Activated T-helper 1 cell treated with anti-CD3 and anti-CD28 coated beads, Interleukin-12 subunit alpha, Interleukin-12 subunit beta, Interleukin-2, Interleukin-4 antibody, amounts not matched to agents 30 ng/mL and 10 ng/mL and 1 ng/mL, durations not matched to agents 14 hours and 24 hours and 36 hours (primary cell): ENCODE measurements at regions of chrX and their contacts with region 1.

Region 1: GRCh38 chrX:103817502-103817901 is 14.6 kb downstream of the RAB9B start:
- DNase-seq: no peak
- H3K4me3 Mint-ChIP-seq: no peak overlapping the region
- H3K27ac Mint-ChIP-seq: no peak overlapping the region
- H3K4me1 Mint-ChIP-seq: no peaks in the 10 kb centered on the region
- H3K27me3 Mint-ChIP-seq: peaks cover 19% of the 10 kb centered on the region

Region 2: GRCh38 chrX:103293118-103293517 is 524.4 kb before region 1 on chrX:
- intact Hi-C with region 1: no loop called
- DNase-seq: no peak
- H3K4me3 Mint-ChIP-seq: no peak overlapping the region
- H3K27ac Mint-ChIP-seq: no peak overlapping the region
- H3K4me1 Mint-ChIP-seq: no peaks in the 10 kb centered on the region
- H3K27me3 Mint-ChIP-seq: peaks cover 3% of the 10 kb centered on the region

Region 3: GRCh38 chrX:103533511-103534216 is 283.8 kb before region 1 on chrX:
- intact Hi-C with region 1: loop called (anchors 1 kb)
- DNase-seq: peak; percentile 33
- H3K4me3 Mint-ChIP-seq: peak overlapping the region; percentile 74
- H3K27ac Mint-ChIP-seq: no peak overlapping the region
- H3K4me1 Mint-ChIP-seq: peaks cover 6% of the 10 kb centered on the region
- H3K27me3 Mint-ChIP-seq: peaks cover 6% of the 10 kb centered on the region

Region 4: GRCh38 chrX:103711533-103712369 is 105.8 kb before region 1 on chrX:
- intact Hi-C with region 1: loop called (anchors 1 kb)
- DNase-seq: peak; percentile 19
- H3K4me3 Mint-ChIP-seq: no peak overlapping the region
- H3K27ac Mint-ChIP-seq: no peak overlapping the region
- H3K4me1 Mint-ChIP-seq: no peaks in the 10 kb centered on the region
- H3K27me3 Mint-ChIP-seq: peaks cover 7% of the 10 kb centered on the region

Region 5: DNA sequence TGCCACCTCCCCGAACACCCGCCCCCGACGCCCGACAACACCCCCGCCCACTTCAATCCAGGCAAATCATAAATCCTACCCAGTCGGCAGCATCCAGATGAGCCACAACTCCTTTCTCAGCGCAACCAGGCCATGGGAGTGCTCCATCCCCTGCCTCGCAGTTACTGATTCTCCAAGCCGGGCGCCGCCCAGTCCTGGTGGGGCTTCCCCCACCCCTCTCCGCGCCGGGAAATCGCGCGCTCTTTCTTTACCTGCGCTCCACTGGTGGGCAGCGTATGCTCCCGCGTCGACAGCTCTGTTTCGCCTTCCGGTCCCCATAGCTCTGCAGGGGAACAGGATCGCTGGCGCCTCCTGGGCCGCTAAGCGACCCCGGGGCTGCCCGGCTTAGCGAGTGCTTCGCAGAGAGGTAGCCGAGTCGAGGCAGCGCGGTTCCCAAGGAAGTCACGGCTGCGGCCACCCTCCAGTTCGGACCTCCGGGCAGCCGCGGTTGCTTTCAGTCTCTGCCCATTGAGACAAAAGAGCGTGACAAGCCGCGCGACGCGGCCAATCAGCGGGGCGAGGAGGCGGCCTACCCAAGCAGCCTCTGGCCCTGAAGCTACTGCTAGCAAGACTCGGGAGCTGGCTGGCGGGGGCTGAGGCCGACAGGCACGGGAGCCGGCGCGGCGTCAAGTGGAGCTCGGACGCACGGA is 101.2 kb after region 1 on chrX:
- intact Hi-C with region 1: no loop called
- DNase-seq: peak; percentile 57
- H3K4me3 Mint-ChIP-seq: peak overlapping the region; percentile 93
- H3K27ac Mint-ChIP-seq: peak overlapping the region; percentile 91
- H3K4me1 Mint-ChIP-seq: peaks cover 17% of the 10 kb centered on the region
- H3K27me3 Mint-ChIP-seq: no peaks in the 10 kb centered on the region